MCF 10A (cell line): ENCODE measurements at regions of chr3 and their contacts with region 1.

Region 1: GRCh38 chr3:190339130-190339529 is 16.9 kb upstream of the CLDN1 start:
- DNase-seq: peak; percentile 51
- H3K4me3 Mint-ChIP-seq: no peak overlapping the region
- H3K27ac Mint-ChIP-seq: peak overlapping the region; percentile 55
- H3K4me1 Mint-ChIP-seq: peaks cover 37% of the 10 kb centered on the region
- H3K27me3 Mint-ChIP-seq: no peaks in the 10 kb centered on the region
- CTCF ChIP-seq: peak; percentile 17

Region 2: GRCh38 chr3:190359813-190360212 is 20.7 kb after region 1 on chr3:
- CTCF ChIA-PET with region 1: interaction called, 3 read pairs
- POLR2A ChIA-PET with region 1: interaction called, 32 read pairs
- intact Hi-C with region 1: no loop called
- DNase-seq: no peak
- H3K4me3 Mint-ChIP-seq: no peak overlapping the region
- H3K27ac Mint-ChIP-seq: peak overlapping the region; percentile 8
- H3K4me1 Mint-ChIP-seq: peaks cover 22% of the 10 kb centered on the region
- H3K27me3 Mint-ChIP-seq: no peaks in the 10 kb centered on the region
- CTCF ChIP-seq: no peak

Region 3: GRCh38 chr3:190366145-190366544 is 27.0 kb after region 1 on chr3:
- CTCF ChIA-PET with region 1: interaction called, 5 read pairs
- POLR2A ChIA-PET with region 1: interaction called, 119 read pairs
- intact Hi-C with region 1: no loop called
- DNase-seq: peak; percentile 79
- H3K4me3 Mint-ChIP-seq: no peak overlapping the region
- H3K27ac Mint-ChIP-seq: peak overlapping the region; percentile 87
- H3K4me1 Mint-ChIP-seq: peaks cover 37% of the 10 kb centered on the region
- H3K27me3 Mint-ChIP-seq: no peaks in the 10 kb centered on the region
- CTCF ChIP-seq: no peak

Region 4: DNA sequence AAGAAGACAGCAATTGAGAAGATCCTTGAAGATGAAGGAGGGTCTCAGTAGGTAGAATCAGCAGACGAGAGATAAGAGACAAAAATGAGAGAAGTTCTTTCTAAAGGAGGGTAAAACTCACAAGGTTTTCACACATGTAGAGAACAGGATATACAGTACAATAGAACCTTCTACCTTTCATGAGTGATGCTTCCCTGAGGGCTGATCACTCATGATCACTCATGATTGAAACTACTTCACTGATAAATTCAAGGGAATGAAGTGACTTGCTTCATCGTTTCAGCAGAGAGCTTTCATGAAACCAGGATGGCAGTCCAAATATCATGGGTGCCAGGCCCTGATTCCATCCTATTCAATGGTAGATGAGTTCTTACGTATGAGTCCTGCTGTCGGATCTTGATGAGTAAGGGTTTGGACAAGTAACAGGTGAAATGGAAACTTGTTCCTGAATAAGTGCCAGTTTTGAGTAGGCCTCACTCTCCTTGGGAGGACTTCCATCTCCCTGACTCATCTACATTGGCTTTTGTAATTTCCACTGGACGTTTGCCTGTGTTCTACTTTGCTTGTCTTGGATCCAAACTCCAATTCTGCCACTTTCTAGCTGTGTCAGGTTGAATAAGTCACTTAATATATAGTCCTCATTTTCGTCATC is 39.2 kb after region 1 on chr3:
- CTCF ChIA-PET with region 1: interaction called, 19 read pairs
- POLR2A ChIA-PET with region 1: interaction called, 132 read pairs
- intact Hi-C with region 1: no loop called
- DNase-seq: peak; percentile 98
- H3K4me3 Mint-ChIP-seq: no peak overlapping the region
- H3K27ac Mint-ChIP-seq: peak overlapping the region; percentile 2
- H3K4me1 Mint-ChIP-seq: peaks cover 55% of the 10 kb centered on the region
- H3K27me3 Mint-ChIP-seq: no peaks in the 10 kb centered on the region
- CTCF ChIP-seq: no peak